GM13977 (cell line): ENCODE measurements at regions of chr6 and their contacts with region 1.

Region 1: DNA sequence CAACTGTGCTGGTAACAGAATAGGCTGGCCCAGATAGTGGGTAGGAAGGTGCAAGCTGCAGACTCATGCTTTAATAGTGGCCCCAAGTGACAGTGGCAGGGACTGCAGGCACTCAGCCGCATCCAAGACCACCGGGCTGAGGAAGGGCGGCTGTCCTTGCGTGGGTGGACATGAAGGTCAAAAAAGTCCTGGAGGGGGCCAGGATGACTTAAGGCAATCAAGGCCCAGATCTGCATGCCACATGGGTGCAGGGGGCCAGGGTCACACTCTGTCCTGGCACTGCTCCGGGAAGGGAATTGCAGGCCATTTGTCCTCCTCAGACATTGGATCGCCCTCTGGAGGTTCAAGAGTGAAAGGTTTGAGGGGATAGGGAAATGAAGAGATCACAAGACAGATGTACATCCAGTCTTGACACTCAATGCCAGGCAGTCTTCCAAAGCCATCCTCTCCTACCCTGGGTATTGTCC is 10.4 kb upstream of the VNN2 start:
- DNase-seq: peak; percentile 25
- CTCF ChIP-seq: peak; percentile 81

Region 2: DNA sequence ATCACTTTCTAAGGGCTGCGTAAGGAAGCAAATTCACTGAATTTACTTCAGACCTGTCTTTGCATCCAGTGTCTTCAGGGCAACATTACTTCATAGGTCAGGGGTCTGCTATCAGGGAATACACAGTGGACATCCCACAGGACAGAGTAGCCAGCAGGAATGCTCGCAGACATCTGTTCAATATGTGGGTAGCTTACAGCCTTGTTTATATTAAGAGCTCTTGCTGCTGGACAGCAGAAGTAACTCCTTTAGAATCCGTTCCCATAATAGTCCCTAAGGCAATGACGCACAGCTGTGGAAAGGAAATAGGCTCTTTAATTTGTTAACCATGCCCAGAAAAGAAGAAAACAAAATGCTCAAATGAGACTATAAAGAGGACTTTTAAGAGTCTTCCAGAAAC is 565.5 kb before region 1 on chr6:
- in situ Hi-C with region 1: no loop called
- DNase-seq: no peak
- CTCF ChIP-seq: no peak

Region 3: DNA sequence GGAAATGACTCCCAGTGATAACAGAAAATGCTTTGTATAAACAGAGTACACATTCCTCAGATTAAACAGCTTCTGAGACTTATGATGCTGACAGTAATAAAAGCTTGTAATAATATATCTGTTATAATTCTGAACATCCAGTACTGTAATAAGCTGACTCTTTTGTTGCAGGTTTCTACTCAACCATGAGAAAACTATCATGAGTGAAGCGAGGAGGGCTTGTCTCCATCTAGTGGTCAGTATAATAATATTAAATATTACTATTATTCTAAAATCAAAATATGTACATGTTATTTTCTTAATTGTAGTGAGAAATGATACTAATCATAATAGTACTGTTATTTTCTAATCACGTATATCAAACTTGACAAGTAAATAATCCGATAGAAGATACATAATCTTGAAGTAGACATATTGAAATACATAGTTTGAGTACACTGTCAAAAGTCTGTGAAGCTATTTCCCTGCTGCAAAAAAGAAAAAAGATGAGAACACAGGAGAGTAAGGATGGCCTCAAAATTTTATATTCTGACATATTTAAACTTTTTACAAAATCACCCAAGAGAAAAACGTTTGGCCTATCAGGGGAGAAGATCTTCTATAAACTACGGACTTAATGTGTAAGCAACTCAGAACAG is 549.9 kb before region 1 on chr6:
- in situ Hi-C with region 1: no loop called
- DNase-seq: peak; percentile 6
- CTCF ChIP-seq: peak; percentile 30

Region 4: DNA sequence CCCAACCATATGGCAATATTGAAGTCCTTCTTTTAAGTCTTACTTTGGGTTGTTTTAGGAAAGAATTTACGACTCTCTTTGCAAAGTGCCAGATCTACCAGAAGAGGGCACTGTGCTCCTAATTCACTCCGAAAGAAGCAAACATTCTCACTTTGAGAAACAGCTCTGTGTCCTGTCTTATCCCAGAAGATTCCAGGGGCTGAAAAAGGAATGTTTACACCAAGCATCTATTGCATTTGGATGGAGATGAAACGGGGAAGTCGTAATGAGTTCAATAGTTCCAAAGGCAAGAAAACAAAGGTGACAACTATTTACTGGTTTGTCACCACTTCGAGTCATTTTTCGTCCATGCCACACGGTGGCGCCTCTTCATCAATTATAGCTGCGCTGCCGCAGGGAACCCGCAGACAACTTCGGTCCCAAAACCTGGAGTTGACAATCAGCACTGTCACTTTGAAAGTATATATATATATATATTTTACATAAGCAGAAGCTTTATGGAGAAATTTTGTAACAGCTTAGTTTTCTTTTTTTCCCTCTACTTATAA is 488.4 kb before region 1 on chr6:
- in situ Hi-C with region 1: loop called (anchors 25 kb)
- DNase-seq: peak; percentile 61
- CTCF ChIP-seq: peak; percentile 84

Region 5: GRCh38 chr6:132527791-132528190 is 240.3 kb before region 1 on chr6:
- in situ Hi-C with region 1: loop called (anchors 5 kb)
- DNase-seq: no peak
- CTCF ChIP-seq: no peak

Region 6: DNA sequence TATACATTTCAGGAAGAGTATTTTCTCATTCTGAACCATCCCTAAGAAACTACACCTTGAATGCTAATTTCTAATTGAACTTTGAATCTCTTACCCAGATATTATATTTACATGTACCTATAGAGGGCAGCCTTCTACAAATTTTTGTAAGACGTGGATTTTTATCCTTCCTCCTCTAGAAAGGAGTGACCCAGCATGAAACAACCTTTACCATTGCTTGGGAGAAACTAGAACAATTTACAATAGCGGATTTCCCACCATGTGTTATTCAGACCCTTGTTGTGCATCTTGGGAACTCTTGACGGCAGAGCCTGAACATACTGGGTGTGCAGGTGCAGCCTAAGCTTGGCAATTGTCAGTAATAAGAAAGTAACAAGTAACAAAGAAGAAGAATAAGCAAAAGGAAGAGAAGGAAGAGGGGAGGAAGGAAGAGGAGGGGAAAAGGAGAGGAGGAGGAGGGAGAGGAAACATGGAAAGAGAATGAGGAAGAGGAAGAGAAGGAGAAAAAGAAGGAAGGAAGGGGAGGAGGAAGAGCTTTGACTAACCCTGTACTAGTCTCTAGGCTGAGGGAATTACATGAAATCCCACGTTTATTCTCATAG is 98.3 kb before region 1 on chr6:
- in situ Hi-C with region 1: loop called (anchors 10 kb)
- DNase-seq: peak; percentile 31
- CTCF ChIP-seq: peak; percentile 46

Region 7: DNA sequence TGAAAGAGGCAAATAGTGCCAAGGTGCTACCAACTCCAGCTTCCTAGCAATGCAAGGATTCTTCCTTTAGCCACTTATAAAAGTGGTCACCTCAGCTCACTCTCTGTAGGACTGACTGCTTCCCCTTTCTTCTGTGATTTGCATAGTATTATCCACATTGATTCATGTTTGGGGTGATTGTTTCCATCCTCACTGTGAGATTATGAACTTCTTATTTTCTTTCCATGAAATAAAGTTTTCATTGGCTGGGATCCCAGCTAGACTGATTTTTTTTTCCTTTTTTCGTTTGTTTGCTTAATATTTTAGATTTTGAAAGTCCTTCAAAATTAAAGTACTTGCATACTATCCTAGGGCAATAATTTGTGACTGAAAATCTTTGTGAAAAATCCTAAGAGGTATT is 523.6 kb after region 1 on chr6:
- in situ Hi-C with region 1: no loop called
- DNase-seq: no peak
- CTCF ChIP-seq: no peak

Region 8: GRCh38 chr6:133326584-133326983 is 558.5 kb after region 1 on chr6:
- in situ Hi-C with region 1: no loop called
- DNase-seq: no peak
- CTCF ChIP-seq: no peak